ENCODE measurements at regions of chr18 and their contacts with region 1.

Region 1: GRCh38 chr18:26383454-26384270 is 157.4 kb downstream of the TAF4B start:
- DNase-seq: peak; percentile 36
- H3K27ac ChIP-seq: no peak overlapping the region
- CTCF ChIP-seq: peak; percentile 81

Region 2: GRCh38 chr18:26526128-26526965 is 142.7 kb after region 1 on chr18:
- CTCF ChIA-PET with region 1: no interaction called
- POLR2A ChIA-PET with region 1: no interaction called
- DNase-seq: no peak
- H3K27ac ChIP-seq: no peak overlapping the region
- CTCF ChIP-seq: no peak

Region 3: GRCh38 chr18:26548429-26549262 is 165.0 kb after region 1 on chr18 and contains the start of gene KCTD1:
- CTCF ChIA-PET with region 1: interaction called, 16 read pairs
- POLR2A ChIA-PET with region 1: no interaction called
- DNase-seq: peak; percentile 62
- H3K27ac ChIP-seq: peak within 1 kb of the TSS; percentile 99
- CTCF ChIP-seq: no peak

Measured in RWPE1 (cell line).